CD8-positive, alpha-beta T cell (primary cell): ENCODE measurements at regions of chr17 and their contacts with region 1.

Region 1: GRCh38 chr17:75749545-75750389 is 15.2 kb downstream of the GALK1 start:
- DNase-seq: peak; percentile 77 to 95 (median 87)
- ATAC-seq: peak; percentile 64
- H3K4me3 ChIP-seq: no peak overlapping the region
- H3K4me3 Mint-ChIP-seq: no peak overlapping the region
- H3K27ac ChIP-seq: no peak overlapping the region
- H3K27ac Mint-ChIP-seq: no peak overlapping the region
- H3K4me1 ChIP-seq: peaks cover 23% of the 10 kb centered on the region
- H3K4me1 Mint-ChIP-seq: peaks cover 19% of the 10 kb centered on the region
- H3K27me3 ChIP-seq: no peaks in the 10 kb centered on the region
- H3K27me3 Mint-ChIP-seq: peaks cover 2% of the 10 kb centered on the region
- CTCF ChIP-seq: peak; percentile 90

Region 2: GRCh38 chr17:75430159-75430974 is 319.4 kb before region 1 on chr17:
- CTCF ChIA-PET with region 1: interaction called, 8 read pairs
- POLR2A ChIA-PET with region 1: no interaction called
- intact Hi-C with region 1: loop called in 1 of 2 experiments (anchors 2 kb)
- DNase-seq: no peak
- ATAC-seq: no peak
- H3K4me3 ChIP-seq: no peak overlapping the region
- H3K4me3 Mint-ChIP-seq: no peak overlapping the region
- H3K27ac ChIP-seq: no peak overlapping the region
- H3K27ac Mint-ChIP-seq: no peak overlapping the region
- H3K4me1 ChIP-seq: peaks cover 6% of the 10 kb centered on the region
- H3K4me1 Mint-ChIP-seq: peaks cover 11% of the 10 kb centered on the region
- H3K27me3 ChIP-seq: no peaks in the 10 kb centered on the region
- H3K27me3 Mint-ChIP-seq: peaks cover 5% of the 10 kb centered on the region
- CTCF ChIP-seq: no peak

Region 3: GRCh38 chr17:75549221-75550138 is 200.3 kb before region 1 on chr17:
- CTCF ChIA-PET with region 1: no interaction called
- POLR2A ChIA-PET with region 1: no interaction called
- intact Hi-C with region 1: no loop called
- DNase-seq: no peak
- ATAC-seq: no peak
- H3K4me3 ChIP-seq: no peak overlapping the region
- H3K4me3 Mint-ChIP-seq: no peak overlapping the region
- H3K27ac ChIP-seq: no peak overlapping the region
- H3K27ac Mint-ChIP-seq: no peak overlapping the region
- H3K4me1 ChIP-seq: no peaks in the 10 kb centered on the region
- H3K4me1 Mint-ChIP-seq: no peaks in the 10 kb centered on the region
- H3K27me3 ChIP-seq: no peaks in the 10 kb centered on the region
- H3K27me3 Mint-ChIP-seq: no peaks in the 10 kb centered on the region
- CTCF ChIP-seq: no peak

Region 4: GRCh38 chr17:75652915-75653549 is 96.7 kb before region 1 on chr17:
- CTCF ChIA-PET with region 1: interaction called, 103 read pairs
- POLR2A ChIA-PET with region 1: no interaction called
- intact Hi-C with region 1: no loop called
- DNase-seq: peak in 6 of 9 experiments; percentile 9 to 64 (median 42)
- ATAC-seq: peak; percentile 100
- H3K4me3 ChIP-seq: no peak overlapping the region
- H3K4me3 Mint-ChIP-seq: no peak overlapping the region
- H3K27ac ChIP-seq: no peak overlapping the region
- H3K27ac Mint-ChIP-seq: no peak overlapping the region
- H3K4me1 ChIP-seq: no peaks in the 10 kb centered on the region
- H3K4me1 Mint-ChIP-seq: peaks cover 9% of the 10 kb centered on the region
- H3K27me3 ChIP-seq: no peaks in the 10 kb centered on the region
- H3K27me3 Mint-ChIP-seq: no peaks in the 10 kb centered on the region
- CTCF ChIP-seq: peak; percentile 59

Region 5: DNA sequence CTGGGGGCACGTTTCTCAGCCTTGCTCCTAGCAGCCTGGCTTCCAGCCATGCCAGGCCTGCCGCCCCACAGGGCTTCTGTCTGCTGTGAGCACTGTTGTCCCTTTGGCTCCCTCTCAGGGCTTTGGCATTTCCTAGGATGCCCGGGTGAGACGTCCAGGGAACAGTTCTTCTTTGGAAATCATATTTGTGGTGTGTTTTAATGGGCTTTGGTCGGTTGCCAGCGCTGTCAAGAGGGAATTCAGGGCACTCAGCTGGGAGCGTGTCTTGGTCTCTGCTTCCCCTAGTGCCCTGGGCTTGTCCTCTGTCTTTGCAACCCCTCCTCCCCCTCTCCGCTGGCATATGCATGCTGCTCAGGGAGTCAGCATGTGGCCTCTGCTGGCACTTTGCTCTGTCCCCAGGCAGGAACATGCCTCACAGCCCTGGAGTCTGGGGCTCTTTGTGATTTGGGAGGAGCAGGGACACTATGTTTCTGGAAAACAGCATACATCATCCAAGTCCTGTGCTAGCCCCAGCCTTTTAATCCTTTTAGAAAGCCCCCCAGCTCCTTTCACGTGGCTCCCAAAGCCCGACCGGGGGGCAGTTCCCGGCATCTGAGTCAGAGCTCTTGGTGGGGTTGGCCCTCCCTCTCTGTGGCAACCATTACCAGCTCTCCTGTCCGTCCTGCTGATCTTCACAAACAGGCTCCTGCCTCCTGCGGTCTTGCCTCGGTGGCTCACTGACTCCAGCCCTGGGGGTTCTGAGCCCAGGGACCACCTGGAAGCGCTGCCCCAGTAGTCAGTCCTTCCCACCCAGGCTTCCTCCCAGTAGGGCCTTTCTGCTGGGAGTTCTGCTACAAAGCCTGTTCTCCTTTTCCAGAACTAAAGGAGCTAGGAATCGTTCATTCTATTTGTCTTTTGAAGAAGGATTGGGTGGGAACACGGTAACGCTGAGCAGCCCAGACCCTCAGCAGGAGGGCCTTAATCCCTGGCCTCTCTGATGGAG is 56.0 kb before region 1 on chr17:
- CTCF ChIA-PET with region 1: interaction called, 53 read pairs
- POLR2A ChIA-PET with region 1: no interaction called
- intact Hi-C with region 1: no loop called
- DNase-seq: no peak
- ATAC-seq: no peak
- H3K4me3 ChIP-seq: no peak overlapping the region
- H3K4me3 Mint-ChIP-seq: no peak overlapping the region
- H3K27ac ChIP-seq: no peak overlapping the region
- H3K27ac Mint-ChIP-seq: no peak overlapping the region
- H3K4me1 ChIP-seq: peaks cover 26% of the 10 kb centered on the region
- H3K4me1 Mint-ChIP-seq: peaks cover 34% of the 10 kb centered on the region
- H3K27me3 ChIP-seq: no peaks in the 10 kb centered on the region
- H3K27me3 Mint-ChIP-seq: no peaks in the 10 kb centered on the region
- CTCF ChIP-seq: no peak

Region 6: DNA sequence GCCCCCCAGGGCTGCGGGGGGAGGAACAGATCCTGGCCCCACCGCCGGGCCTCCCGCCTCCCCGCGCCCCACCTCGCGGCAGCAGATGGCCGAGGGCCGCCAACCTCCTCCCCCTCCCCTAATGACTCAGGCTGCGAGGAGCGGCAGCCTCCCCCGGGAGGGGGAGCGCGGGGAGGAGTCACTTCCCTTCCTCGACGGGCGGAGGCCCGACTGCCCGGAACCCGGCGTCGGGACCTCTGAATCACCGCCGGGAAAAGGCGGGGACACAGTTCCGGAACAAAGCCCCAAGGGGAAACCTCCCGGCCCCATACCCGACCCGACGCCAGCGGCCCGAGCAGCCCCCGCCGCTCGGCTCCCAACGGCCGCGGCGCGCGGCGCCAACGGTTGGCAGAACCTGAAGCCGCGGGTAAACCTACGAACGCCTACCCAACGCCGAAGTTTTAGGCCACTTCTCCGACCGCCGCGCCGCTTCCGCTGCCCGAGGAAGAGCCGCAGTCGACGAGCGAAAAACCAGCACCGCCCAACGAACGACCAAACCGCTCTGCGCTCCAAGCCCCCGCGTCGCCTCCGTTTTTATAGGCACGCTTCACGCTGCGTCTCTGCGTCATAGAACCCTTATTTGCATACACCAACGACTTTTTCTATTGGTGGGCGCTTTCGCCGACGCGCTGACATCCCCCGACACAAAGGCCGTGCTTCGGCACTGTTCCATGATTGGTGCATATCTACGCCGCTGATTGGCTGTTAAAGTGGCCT is 29.6 kb after region 1 on chr17:
- CTCF ChIA-PET with region 1: interaction called, 18 read pairs
- POLR2A ChIA-PET with region 1: interaction called, 60 read pairs
- intact Hi-C with region 1: no loop called
- DNase-seq: peak; percentile 87 to 99 (median 93)
- ATAC-seq: peak; percentile 66
- H3K4me3 ChIP-seq: peak overlapping the region; percentile 87
- H3K4me3 Mint-ChIP-seq: peak overlapping the region; percentile 93
- H3K27ac ChIP-seq: peak overlapping the region; percentile 97
- H3K27ac Mint-ChIP-seq: peak overlapping the region; percentile 98
- H3K4me1 ChIP-seq: peaks cover 44% of the 10 kb centered on the region
- H3K4me1 Mint-ChIP-seq: peaks cover 46% of the 10 kb centered on the region
- H3K27me3 ChIP-seq: no peaks in the 10 kb centered on the region
- H3K27me3 Mint-ChIP-seq: no peaks in the 10 kb centered on the region
- CTCF ChIP-seq: no peak

Region 7: GRCh38 chr17:75845049-75845860 is 95.5 kb after region 1 on chr17:
- CTCF ChIA-PET with region 1: interaction called, 27 read pairs
- POLR2A ChIA-PET with region 1: interaction called, 5 read pairs
- intact Hi-C with region 1: loop called (anchors 1 to 5 kb)
- DNase-seq: peak in 8 of 9 experiments; percentile 29 to 76 (median 61)
- ATAC-seq: peak; percentile 48
- H3K4me3 ChIP-seq: no peak overlapping the region
- H3K4me3 Mint-ChIP-seq: peak overlapping the region; percentile 71
- H3K27ac ChIP-seq: peak overlapping the region; percentile 44 to 93
- H3K27ac Mint-ChIP-seq: peak overlapping the region; percentile 64
- H3K4me1 ChIP-seq: peaks cover 35% of the 10 kb centered on the region
- H3K4me1 Mint-ChIP-seq: peaks cover 31% of the 10 kb centered on the region
- H3K27me3 ChIP-seq: no peaks in the 10 kb centered on the region
- H3K27me3 Mint-ChIP-seq: no peaks in the 10 kb centered on the region
- CTCF ChIP-seq: peak; percentile 65